ENCODE measurements at regions of chr11 and their contacts with region 1.

Region 1: DNA sequence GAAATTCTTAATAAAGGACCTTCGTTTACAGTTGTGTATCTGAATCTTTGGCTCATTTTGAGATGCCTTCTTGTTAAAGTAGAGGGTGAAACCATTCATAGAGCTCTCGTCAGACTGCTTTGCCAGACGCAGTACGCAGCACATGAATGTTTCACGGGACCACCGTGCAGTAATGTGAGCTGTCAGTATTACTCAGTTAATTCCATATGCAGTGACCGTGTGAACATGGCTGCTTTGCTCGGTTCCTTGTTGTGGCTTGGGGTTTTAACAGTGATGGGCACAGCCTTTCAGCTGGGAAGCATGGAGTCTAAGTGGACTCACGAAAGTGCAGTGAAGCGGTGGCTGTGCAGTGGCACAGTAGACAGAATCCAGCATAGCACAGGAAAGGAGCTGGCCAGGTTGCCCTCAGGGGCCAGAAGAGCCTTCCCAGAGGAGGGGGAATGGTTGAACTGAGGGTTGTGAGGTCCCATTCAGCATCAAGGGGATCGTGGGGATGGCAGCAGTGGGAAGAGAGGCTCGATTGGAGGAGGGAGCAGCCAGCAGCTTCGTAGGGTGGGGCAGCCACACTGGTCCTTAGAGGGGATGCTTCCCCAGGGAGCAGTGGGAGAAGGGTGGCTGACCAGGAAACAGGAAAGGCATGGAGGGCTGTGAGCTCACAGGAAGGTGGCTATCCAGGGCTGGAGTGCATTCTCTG is 31.4 kb downstream of the PPFIA1 start:
- DNase-seq: no peak
- H3K4me3 ChIP-seq: no peak overlapping the region
- H3K27ac ChIP-seq: no peak overlapping the region
- H3K4me1 ChIP-seq: peaks cover 0 to 10% (median 0%) of the 10 kb centered on the region in 4 experiments; a peak in 1 of 7 replicates
- H3K27me3 ChIP-seq: no peaks in the 10 kb centered on the region
- CTCF ChIP-seq: no peak
- EP300 ChIP-seq: no peak
- POLR2A ChIP-seq: no peak
- RAD21 ChIP-seq: no peak

Region 2: DNA sequence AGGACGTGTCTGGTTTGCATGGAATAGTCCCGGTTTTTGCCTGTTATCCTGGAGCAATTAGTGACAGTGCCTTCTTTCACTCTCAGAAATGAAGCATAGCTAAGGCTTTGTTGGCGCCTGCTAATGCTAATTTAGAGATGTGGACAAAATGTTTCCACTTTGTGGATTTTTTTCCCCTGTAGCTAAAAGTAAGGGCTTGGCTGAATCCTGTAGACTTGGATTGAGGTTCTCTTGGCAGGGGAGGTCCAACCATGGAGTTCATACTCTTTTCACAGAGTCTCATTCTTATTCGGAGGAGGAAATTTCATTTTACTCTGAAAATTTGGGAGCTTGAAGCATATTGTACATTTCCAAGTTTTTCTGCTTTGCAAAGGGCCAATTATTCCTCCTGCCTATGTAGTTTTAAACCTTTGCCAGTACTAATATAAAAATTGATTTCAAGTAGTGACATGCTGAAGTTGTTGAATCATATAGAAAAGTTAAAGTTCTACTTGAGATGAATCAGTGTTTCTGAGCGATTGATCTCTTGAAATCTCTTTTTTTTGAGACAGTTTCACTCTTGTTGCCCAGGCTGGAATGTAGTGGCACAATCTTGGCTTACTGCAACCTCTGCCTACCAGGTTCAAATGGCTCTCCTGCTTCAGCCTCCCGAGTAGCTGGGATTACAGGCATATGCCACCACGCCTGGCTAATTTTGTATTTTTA is 11.4 kb before region 1 on chr11:
- CTCF ChIA-PET with region 1: interaction called, 10 read pairs
- POLR2A ChIA-PET with region 1: interaction called, 6 read pairs
- DNase-seq: no peak
- H3K4me3 ChIP-seq: no peak overlapping the region
- H3K27ac ChIP-seq: no peak overlapping the region
- H3K4me1 ChIP-seq: no peaks in the 10 kb centered on the region
- H3K27me3 ChIP-seq: no peaks in the 10 kb centered on the region
- CTCF ChIP-seq: no peak
- EP300 ChIP-seq: no peak
- POLR2A ChIP-seq: no peak
- RAD21 ChIP-seq: no peak

Measured in H1 (cell line).